Stomach (tissue), 19 donors: ENCODE measurements at regions of chr1 and their contacts with region 1.

Region 1: GRCh38 chr1:107817935-107818334 is 147.0 kb downstream of the VAV3 start:
- DNase-seq: no peak
- H3K4me3 ChIP-seq: no peak overlapping the region
- H3K27ac ChIP-seq: no peak overlapping the region
- H3K4me1 ChIP-seq: no peaks in the 10 kb centered on the region
- H3K27me3 ChIP-seq: no peaks in the 10 kb centered on the region
- CTCF ChIP-seq: no peak
- EP300 ChIP-seq: no peak
- POLR2A ChIP-seq: no peak

Region 2: GRCh38 chr1:107547363-107548155 is 270.4 kb before region 1 on chr1:
- intact Hi-C with region 1: no loop called
- DNase-seq: no peak
- H3K4me3 ChIP-seq: no peak overlapping the region
- H3K27ac ChIP-seq: no peak overlapping the region
- H3K4me1 ChIP-seq: no peaks in the 10 kb centered on the region
- H3K27me3 ChIP-seq: no peaks in the 10 kb centered on the region
- CTCF ChIP-seq: no peak
- EP300 ChIP-seq: no peak
- POLR2A ChIP-seq: no peak

Region 3: GRCh38 chr1:107767156-107767582 is 50.8 kb before region 1 on chr1:
- intact Hi-C with region 1: no loop called
- DNase-seq: no peak
- H3K4me3 ChIP-seq: no peak overlapping the region
- H3K27ac ChIP-seq: no peak overlapping the region
- H3K4me1 ChIP-seq: peaks cover 0 to 5% (median 0%) of the 10 kb centered on the region in 4 donors
- H3K27me3 ChIP-seq: no peaks in the 10 kb centered on the region
- CTCF ChIP-seq: no peak
- EP300 ChIP-seq: no peak
- POLR2A ChIP-seq: no peak

Region 4: DNA sequence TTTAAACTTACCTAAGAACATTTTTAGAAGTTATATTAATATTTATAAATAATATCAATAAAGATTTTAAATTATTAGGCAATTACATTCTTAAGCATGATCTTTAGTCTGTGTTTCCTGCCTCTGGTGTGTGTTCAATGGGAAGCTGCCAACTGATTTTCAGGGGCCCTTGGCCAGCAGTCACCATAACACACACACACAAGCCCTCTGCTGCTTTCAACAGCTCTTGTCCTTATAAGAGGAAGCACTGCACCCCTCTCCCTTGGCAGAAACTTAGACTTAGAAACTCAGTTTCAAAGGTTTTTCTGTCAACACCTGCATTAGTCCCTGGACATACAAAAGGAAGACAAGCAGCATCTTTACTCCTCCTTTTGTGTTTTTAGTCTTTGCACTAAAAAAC is 65.6 kb after region 1 on chr1:
- intact Hi-C with region 1: loop called (anchors 10 kb)
- DNase-seq: peak; percentile 24 to 48
- H3K4me3 ChIP-seq: no peak overlapping the region
- H3K27ac ChIP-seq: no peak overlapping the region
- H3K4me1 ChIP-seq: peaks cover 0 to 12% (median 3%) of the 10 kb centered on the region in 4 donors
- H3K27me3 ChIP-seq: no peaks in the 10 kb centered on the region
- CTCF ChIP-seq: no peak
- EP300 ChIP-seq: no peak
- POLR2A ChIP-seq: no peak